HEK293 (cell line): ENCODE measurements at regions of chr11 and their contacts with region 1.

Region 1: GRCh38 chr11:43802509-43802908 is 78.1 kb upstream of the ALKBH3 start:
- H3K4me3 ChIP-seq: no peak overlapping the region
- H3K27ac ChIP-seq: no peak overlapping the region
- H3K4me1 ChIP-seq: no peaks in the 10 kb centered on the region
- CTCF ChIP-seq: no peak

Region 2: DNA sequence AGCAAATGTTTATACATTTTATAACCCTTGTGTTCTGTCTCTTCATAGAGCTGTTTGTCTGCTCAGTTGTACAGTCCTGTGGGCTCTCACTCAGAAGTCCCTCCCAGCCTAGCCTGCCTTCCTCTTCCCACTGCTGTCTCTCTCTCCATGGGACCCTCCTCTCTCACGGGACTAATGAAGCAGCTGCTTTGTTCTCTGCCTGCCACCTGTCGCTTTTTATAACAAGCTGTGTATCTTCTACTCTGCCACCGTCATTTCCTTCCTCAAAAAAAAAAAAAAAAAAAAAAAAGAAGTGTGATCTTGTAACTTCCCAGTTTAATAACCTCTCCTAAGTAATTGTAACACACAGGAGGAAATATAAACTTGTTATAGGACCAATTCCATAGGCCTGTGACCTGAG is 14.1 kb before region 1 on chr11:
- CTCF ChIA-PET with region 1: interaction called, 13 read pairs
- POLR2A ChIA-PET with region 1: no interaction called
- H3K4me3 ChIP-seq: no peak overlapping the region
- H3K27ac ChIP-seq: no peak overlapping the region
- H3K4me1 ChIP-seq: no peaks in the 10 kb centered on the region
- CTCF ChIP-seq: no peak